Activated CD4-positive, alpha-beta memory T cell treated with anti-CD3 and anti-CD28 coated beads for 36 hours (primary cell): ENCODE measurements at regions of chr10 and their contacts with region 1.

Region 1: DNA sequence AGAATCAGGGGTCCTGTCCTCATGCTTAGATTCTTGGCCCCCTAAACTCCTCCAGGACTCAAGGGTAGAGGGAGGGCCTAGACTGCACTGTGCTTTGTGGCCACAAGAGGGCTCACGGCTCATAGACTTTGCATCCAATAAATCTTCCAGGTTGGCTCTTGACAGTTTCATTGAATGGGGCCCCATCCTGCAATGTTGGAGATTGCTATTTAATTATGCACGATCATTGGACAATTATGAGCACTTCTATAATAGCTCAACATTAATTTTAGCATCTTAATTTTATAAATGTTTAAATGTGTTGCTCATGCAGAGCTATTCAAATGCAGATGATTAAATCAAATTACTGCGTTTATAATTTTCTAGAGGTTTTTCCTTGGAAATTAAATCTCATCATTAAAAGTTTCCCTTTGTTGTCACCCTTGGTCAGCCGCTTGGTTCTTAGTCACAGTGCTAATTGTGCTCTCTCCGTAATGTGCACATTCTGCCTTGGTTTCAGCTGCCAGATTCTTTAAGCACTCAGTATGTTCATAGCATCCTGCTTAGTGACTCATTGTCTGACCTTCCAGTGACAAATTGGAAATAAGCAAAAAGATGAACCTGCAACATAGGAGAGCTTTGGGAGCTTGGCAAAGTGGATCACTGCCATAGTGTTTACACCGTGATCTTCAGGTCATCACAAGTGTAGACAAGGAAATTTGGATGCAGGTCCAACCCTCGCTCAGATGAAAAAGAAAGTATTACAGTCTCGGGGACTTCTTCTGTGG is 33.4 kb upstream of the PLPP4 start:
- DNase-seq: peak; percentile 30
- H3K4me3 Mint-ChIP-seq: no peak overlapping the region
- H3K27ac Mint-ChIP-seq: no peak overlapping the region
- H3K4me1 Mint-ChIP-seq: no peaks in the 10 kb centered on the region
- H3K27me3 Mint-ChIP-seq: peaks cover 3% of the 10 kb centered on the region

Region 2: GRCh38 chr10:119796039-119796438 is 627.6 kb before region 1 on chr10:
- CTCF ChIA-PET with region 1: no interaction called
- POLR2A ChIA-PET with region 1: no interaction called
- intact Hi-C with region 1: no loop called
- DNase-seq: no peak
- H3K4me3 Mint-ChIP-seq: no peak overlapping the region
- H3K27ac Mint-ChIP-seq: no peak overlapping the region
- H3K4me1 Mint-ChIP-seq: peaks cover 2% of the 10 kb centered on the region
- H3K27me3 Mint-ChIP-seq: no peaks in the 10 kb centered on the region

Region 3: DNA sequence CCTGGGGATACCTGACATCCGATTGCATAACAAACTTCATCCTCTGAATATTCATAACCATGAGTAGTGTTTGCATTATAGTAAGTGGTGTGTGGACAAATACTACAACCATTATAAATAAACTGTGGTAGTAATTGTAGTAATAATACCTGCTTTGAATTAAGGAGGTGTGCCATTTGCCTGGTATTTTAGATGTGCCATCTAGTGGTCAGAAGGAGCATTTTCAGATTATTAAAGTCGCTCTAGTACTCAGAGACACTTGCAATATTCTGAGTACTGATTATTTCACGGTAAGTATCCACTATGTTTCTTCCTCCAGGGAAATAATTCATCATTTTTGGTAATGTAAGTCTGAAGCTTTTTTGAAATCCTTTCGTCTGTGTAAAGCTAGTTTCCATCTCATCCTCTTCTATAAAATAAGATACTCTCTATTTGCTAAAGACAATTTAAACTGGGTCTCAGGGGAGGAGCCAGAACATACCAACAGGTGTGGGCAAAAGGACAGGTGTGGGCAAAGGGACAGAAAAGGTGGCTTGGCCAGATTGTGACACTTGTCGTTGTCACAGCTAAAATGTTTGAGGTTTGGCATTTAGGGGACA is 312.3 kb after region 1 on chr10:
- CTCF ChIA-PET with region 1: interaction called, 19 read pairs
- POLR2A ChIA-PET with region 1: no interaction called
- intact Hi-C with region 1: no loop called
- DNase-seq: no peak
- H3K4me3 Mint-ChIP-seq: no peak overlapping the region
- H3K27ac Mint-ChIP-seq: no peak overlapping the region
- H3K4me1 Mint-ChIP-seq: no peaks in the 10 kb centered on the region
- H3K27me3 Mint-ChIP-seq: peaks cover 3% of the 10 kb centered on the region